Activated CD4-positive, alpha-beta T cell treated with anti-CD3 and anti-CD28 coated beads for 36 hours (primary cell): ENCODE measurements at regions of chr15 and their contacts with region 1.

Region 1: GRCh38 chr15:76866716-76867321 is 38.3 kb downstream of the SCAPER start:
- DNase-seq: peak; percentile 20
- ATAC-seq: no peak
- H3K4me3 Mint-ChIP-seq: no peak overlapping the region
- H3K27ac Mint-ChIP-seq: no peak overlapping the region
- H3K4me1 Mint-ChIP-seq: peaks cover 38% of the 10 kb centered on the region
- H3K27me3 Mint-ChIP-seq: no peaks in the 10 kb centered on the region

Region 2: GRCh38 chr15:76190834-76191538 is 675.8 kb before region 1 on chr15:
- CTCF ChIA-PET with region 1: interaction called, 4 read pairs
- POLR2A ChIA-PET with region 1: no interaction called
- intact Hi-C with region 1: loop called (anchors 1 to 2 kb)
- DNase-seq: peak; percentile 88
- ATAC-seq: peak; percentile 98
- H3K4me3 Mint-ChIP-seq: no peak overlapping the region
- H3K27ac Mint-ChIP-seq: no peak overlapping the region
- H3K4me1 Mint-ChIP-seq: peaks cover 9% of the 10 kb centered on the region
- H3K27me3 Mint-ChIP-seq: peaks cover 41% of the 10 kb centered on the region

Region 3: DNA sequence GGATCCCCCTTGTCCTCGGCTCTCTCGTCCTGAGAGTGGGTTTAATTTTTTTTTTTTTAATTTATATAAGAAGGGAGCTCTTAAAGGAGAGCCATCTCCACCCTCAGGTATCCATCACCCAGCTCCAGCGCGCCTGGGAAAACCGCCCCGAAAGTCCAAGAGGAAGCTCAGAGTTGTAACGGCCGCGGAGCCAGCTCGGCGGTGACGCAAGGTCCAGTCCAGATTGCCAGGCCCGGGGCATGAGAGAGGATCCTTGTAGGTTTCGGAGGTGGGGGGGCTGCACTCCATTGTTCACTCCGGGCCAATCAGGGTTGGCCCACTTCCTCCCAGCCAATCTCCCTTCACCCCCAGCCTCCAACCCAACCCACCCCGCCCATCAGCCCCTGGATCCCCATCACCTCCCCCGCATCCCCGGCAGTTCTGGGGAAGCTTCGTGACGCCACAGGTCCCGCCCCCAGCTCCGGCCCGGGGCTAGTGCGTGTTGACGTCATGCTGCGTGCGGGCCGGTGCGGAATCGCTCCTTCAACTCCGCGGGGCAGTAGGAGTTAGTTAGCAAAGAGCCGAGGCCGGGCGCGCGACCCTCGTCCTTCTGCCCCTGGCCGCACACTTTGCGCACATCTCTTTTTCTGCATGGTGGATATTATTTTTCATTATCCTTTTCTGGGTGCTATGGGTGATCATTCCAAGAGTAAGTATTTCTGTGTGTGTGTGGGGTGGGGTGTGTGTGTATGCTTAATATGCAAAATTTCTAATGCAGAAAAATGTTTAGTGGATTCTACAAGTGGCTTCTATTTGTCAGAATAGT is 530.4 kb before region 1 on chr15 and contains the start of gene ISL2:
- CTCF ChIA-PET with region 1: no interaction called
- POLR2A ChIA-PET with region 1: no interaction called
- intact Hi-C with region 1: loop called in 1 of 2 experiments (anchors 5 kb)
- DNase-seq: peak; percentile 88
- ATAC-seq: peak; percentile 47
- H3K4me3 Mint-ChIP-seq: peak within 1 kb of the TSS; percentile 67
- H3K27ac Mint-ChIP-seq: peak within 1 kb of the TSS; percentile 59
- H3K4me1 Mint-ChIP-seq: peaks cover 45% of the 10 kb centered on the region
- H3K27me3 Mint-ChIP-seq: peaks cover 61% of the 10 kb centered on the region
- total RNA-seq, gene ISL2: 0.25 TPM in 1 of 2 experiments, not detected in the other

Region 4: DNA sequence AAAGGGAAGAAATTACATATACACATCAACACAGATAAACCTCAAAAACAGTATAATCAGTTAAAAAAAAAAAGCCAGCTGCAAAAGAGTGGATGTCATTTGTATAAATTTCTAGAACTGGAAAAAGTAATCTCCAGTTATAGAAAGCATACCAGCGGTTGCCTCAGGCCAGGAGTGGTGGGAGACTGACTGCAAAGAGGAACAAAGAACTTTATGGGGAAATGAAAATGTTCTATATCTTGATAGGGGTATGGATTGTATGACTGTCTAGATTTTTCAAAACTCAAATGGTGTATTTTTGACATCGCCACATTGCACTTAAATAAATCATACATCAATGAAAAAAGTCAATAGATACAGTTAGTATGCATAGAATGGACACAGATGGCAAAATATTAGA is 203.3 kb before region 1 on chr15:
- CTCF ChIA-PET with region 1: no interaction called
- POLR2A ChIA-PET with region 1: no interaction called
- intact Hi-C with region 1: loop called in 1 of 2 experiments (anchors 10 kb)
- DNase-seq: no peak
- ATAC-seq: no peak
- H3K4me3 Mint-ChIP-seq: no peak overlapping the region
- H3K27ac Mint-ChIP-seq: no peak overlapping the region
- H3K4me1 Mint-ChIP-seq: peaks cover 7% of the 10 kb centered on the region
- H3K27me3 Mint-ChIP-seq: no peaks in the 10 kb centered on the region

Region 5: GRCh38 chr15:76823890-76824289 is 42.9 kb before region 1 on chr15:
- CTCF ChIA-PET with region 1: no interaction called
- POLR2A ChIA-PET with region 1: no interaction called
- intact Hi-C with region 1: loop called in 1 of 2 experiments (anchors 1 kb)
- DNase-seq: no peak
- ATAC-seq: no peak
- H3K4me3 Mint-ChIP-seq: no peak overlapping the region
- H3K27ac Mint-ChIP-seq: no peak overlapping the region
- H3K4me1 Mint-ChIP-seq: peaks cover 19% of the 10 kb centered on the region
- H3K27me3 Mint-ChIP-seq: no peaks in the 10 kb centered on the region

Region 6: GRCh38 chr15:77201665-77202064 is 334.8 kb after region 1 on chr15:
- CTCF ChIA-PET with region 1: no interaction called
- POLR2A ChIA-PET with region 1: no interaction called
- intact Hi-C with region 1: no loop called
- DNase-seq: no peak
- ATAC-seq: no peak
- H3K4me3 Mint-ChIP-seq: no peak overlapping the region
- H3K27ac Mint-ChIP-seq: no peak overlapping the region
- H3K4me1 Mint-ChIP-seq: no peaks in the 10 kb centered on the region
- H3K27me3 Mint-ChIP-seq: no peaks in the 10 kb centered on the region